ENCODE measurements at regions of chr5 and their contacts with region 1.

Region 1: DNA sequence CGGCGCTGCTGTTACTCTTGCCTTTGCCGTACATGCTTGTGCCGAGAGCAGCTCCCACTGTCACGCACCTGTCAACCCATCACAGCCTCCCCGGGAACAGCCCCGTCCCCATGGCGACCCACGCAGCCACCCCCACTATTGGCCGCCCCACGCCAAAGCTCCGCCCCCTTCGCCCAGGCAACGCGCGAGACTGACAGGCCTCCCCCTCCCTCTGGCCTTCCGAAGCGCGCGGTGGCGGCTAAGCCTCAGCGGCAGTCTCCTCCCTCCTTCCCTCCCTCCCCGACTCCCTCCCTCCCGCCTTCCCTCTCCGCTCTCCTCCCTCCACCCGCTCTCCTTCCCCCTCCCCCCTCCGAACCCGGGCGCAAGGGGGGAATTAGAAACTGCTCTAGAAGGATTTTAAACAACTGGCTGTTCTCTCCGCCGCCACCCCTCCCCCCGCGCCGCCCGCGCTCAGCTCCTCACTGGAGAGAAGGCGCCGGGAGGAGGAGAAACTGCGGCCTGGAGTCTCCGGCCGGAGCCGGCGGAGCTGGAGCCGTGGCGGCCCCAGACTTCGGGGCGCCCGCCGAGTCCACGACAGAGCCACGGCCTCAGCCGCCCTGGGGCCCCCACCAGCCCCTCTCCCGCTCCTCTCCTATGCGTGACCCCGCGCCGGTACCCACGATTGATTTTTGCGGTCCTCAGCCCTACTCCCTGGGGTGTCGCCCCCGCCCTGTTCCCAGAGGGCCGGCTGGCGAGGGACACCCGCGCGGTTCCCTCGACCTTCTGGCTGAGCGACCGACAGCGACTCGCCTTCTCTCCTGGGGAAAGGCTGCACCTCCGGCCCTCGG is at the start of gene SSBP2:
- DNase-seq: peak; percentile 99
- H3K4me3 Mint-ChIP-seq: peak within 1 kb of the TSS; percentile 87
- H3K27ac Mint-ChIP-seq: peak within 1 kb of the TSS; percentile 87
- H3K4me1 Mint-ChIP-seq: peaks cover 22% of the 10 kb centered on the region
- H3K27me3 Mint-ChIP-seq: peaks cover 24% of the 10 kb centered on the region
- total RNA-seq, gene SSBP2: 28.1 to 30.3 TPM

Region 2: DNA sequence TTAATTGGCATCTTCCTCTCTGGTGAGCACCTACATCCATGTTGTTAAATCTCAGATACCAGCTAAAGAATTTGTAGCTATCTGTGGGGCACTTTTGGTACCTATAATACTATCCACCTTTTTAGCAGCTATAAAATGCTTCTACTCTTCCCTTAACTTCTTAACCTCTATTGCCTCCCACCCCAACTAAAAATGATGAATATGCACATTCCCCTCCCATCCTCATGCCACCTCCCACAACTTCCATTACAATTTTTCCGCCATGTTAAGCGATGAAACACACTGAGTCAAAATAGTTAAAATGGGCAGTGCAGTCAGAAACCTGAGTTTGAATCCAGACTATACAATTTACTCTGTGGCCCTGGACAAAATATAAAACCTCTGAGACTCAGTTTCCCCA is 10.5 kb before region 1 on chr5:
- CTCF ChIA-PET with region 1: interaction called, 3 read pairs
- POLR2A ChIA-PET with region 1: interaction called, 14 read pairs
- DNase-seq: no peak
- H3K4me3 Mint-ChIP-seq: no peak overlapping the region
- H3K27ac Mint-ChIP-seq: no peak overlapping the region
- H3K4me1 Mint-ChIP-seq: no peaks in the 10 kb centered on the region
- H3K27me3 Mint-ChIP-seq: no peaks in the 10 kb centered on the region

Region 3: DNA sequence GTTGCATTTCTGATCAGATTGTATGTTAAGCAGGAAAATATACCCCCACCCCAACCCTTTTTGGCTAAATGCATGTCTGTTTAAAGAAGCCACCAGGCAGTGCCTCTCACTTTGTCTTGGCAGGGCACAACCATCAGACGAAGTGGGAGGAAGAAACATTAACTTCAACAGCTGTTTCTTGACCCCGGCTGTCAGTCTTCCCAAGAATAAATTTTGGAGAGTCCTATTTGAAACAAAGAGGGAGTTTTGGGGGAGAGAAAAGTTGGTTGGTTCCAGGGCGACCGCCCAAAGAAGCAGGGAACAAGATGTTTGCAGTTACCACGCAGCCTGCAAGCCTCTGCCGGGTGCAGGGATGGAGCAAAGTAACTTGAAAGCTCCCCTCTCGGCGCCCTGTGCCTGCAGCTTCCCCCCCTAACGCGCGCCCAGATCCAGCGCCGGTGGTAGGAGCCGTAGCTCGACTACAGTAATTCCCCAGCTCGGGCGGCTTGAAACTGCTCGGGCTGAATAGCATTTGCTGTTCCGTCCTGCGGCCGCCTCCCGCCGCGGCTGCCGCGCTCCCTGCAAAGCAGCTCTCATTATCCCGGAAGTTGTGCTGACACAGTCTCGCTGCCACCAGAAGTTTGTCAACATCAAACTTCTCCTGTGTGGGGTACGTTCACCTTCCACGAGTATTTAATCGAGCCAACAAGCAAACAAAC is 100.4 kb after region 1 on chr5:
- CTCF ChIA-PET with region 1: interaction called, 54 read pairs
- POLR2A ChIA-PET with region 1: interaction called, 280 read pairs
- DNase-seq: peak; percentile 93
- H3K4me3 Mint-ChIP-seq: peak overlapping the region; percentile 94
- H3K27ac Mint-ChIP-seq: peak overlapping the region; percentile 93
- H3K4me1 Mint-ChIP-seq: peaks cover 39% of the 10 kb centered on the region
- H3K27me3 Mint-ChIP-seq: no peaks in the 10 kb centered on the region

Region 4: DNA sequence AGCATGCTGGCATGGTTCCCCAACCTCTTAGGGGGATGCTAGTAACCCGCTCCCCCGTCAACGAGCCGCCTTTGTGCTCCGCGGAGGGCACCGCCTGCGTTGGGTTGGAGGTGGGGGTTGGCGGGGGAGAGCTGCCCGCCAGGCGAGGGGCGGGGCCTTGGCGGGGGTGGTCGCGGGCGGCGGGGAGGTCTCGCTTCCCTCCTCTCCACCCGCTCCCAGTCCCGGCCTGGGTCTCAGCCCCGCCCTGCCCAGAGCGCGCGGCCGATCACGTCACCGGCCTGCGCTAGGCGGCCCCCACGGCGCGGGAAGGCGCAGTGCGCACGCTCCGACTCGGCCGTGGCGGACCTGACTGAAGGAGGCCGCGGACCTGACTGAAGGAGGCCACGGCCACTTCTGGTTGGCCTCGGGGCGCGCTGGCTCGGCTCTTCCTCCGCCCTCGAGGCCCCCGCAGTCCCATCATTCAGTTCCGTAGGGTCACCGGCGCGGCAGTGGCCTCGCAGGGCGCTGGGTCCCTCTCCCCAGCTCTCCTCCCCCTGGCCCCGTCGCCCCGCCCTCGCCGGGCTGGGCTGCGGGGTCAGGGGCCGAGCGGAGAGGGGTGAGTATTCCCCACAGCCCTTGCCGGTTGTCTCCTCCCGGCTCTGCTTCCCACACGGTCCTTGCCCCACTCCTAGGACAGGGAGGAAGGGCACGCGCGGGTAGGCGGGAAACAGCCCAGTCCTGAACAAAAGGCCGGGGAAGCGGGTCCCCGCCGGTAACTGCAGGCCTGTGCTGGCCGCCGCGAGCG is 220.7 kb after region 1 on chr5 and contains the start of gene ATG10:
- CTCF ChIA-PET with region 1: no interaction called
- POLR2A ChIA-PET with region 1: interaction called, 24 read pairs
- DNase-seq: peak; percentile 89
- H3K4me3 Mint-ChIP-seq: peak within 1 kb of the TSS; percentile 84
- H3K27ac Mint-ChIP-seq: peak within 1 kb of the TSS; percentile 92
- H3K4me1 Mint-ChIP-seq: peaks cover 23% of the 10 kb centered on the region
- H3K27me3 Mint-ChIP-seq: no peaks in the 10 kb centered on the region
- total RNA-seq, gene ATG10: 9.0 to 10.5 TPM